ENCODE measurements at regions of chr13 and their contacts with region 1.

Region 1: DNA sequence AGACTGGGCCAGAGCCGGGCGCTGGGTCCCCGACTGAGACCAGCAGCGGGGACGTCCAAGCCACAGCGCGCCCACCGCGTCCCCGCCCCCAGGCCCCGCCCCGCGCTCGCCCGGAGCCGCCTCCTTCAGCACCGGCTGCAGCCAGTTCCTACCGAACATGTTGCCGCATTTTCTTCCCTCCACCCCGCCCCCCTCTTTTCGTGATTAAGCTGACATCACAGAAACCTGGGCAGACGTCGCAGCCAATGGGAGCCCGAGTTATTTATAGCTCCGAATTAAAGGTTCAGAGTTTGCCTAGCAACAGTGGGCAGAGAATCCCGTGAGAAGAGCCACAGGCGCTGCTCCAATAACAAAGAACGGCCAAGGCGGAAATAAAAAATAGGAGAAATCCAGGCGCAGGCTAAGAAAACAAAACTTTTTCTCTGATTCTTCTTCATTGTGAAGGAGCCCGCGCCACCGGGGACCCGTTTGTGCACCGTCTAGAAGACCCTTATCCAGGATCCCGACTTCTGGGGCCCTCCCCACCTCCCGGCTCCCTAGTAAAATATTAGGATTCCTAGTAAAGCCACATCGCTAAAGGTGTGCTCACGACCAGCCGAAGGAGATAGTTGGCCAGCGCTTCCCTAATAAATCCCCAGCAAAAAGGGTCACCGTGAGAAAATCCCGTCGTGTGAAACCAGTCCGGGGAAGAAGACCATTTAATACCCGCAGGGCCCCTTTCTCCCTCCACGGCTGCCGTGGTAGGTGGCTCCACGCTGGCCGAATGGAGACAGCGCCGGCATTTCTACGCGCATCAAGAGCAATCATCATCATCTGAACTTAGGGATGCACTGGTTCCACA is 61.7 kb downstream of the SERP2 start:
- DNase-seq: peak; percentile 99 to 100 (median 99)
- H3K4me3 ChIP-seq: peak overlapping the region; percentile 79 to 100 (median 87)
- H3K27ac ChIP-seq: peak overlapping the region; percentile 99
- H3K4me1 ChIP-seq: peaks cover 37 to 53% (median 43%) of the 10 kb centered on the region in 4 experiments
- H3K27me3 ChIP-seq: no peaks in the 10 kb centered on the region

Region 2: GRCh38 chr13:43905435-43906031 is 529.8 kb before region 1 on chr13:
- CTCF ChIA-PET with region 1: interaction called, 148 read pairs
- POLR2A ChIA-PET with region 1: interaction called, 4 read pairs
- DNase-seq: peak; percentile 65 to 81 (median 78)
- H3K4me3 ChIP-seq: no peak overlapping the region
- H3K27ac ChIP-seq: no peak overlapping the region
- H3K4me1 ChIP-seq: no peaks in the 10 kb centered on the region
- H3K27me3 ChIP-seq: no peaks in the 10 kb centered on the region

Region 3: GRCh38 chr13:44050450-44051063 is 384.8 kb before region 1 on chr13:
- CTCF ChIA-PET with region 1: interaction called, 25 read pairs
- POLR2A ChIA-PET with region 1: interaction called, 5 read pairs
- DNase-seq: peak; percentile 52 to 66 (median 58)
- H3K4me3 ChIP-seq: no peak overlapping the region
- H3K27ac ChIP-seq: no peak overlapping the region
- H3K4me1 ChIP-seq: peaks cover 0 to 24% (median 3%) of the 10 kb centered on the region in 4 experiments
- H3K27me3 ChIP-seq: no peaks in the 10 kb centered on the region

Region 4: DNA sequence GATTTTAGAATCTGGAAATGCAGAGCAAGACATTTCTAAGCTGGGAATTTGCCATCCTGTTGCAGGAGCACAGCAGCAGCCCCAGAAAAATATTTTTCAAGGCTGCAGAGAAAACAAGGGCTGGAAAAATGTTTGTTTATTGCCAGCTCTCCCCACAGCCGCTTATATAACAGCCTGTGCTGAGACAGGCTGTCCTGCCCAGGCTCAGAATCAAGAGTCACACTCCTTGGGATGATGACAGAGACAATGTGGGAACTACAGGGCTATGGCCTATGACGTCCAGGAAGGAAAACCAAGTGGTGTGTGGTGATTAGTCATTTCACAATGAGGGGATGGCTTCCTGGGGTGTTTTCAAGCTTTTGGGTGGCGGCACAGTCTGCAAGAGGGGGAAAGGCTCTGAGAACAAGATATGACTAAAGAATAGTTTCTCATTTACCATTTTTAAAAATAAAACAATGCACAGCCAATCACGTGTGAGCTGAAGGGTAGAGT is 198.0 kb before region 1 on chr13:
- CTCF ChIA-PET with region 1: interaction called, 220 read pairs
- POLR2A ChIA-PET with region 1: interaction called, 57 read pairs
- DNase-seq: peak; percentile 95 to 97 (median 97)
- H3K4me3 ChIP-seq: peak overlapping the region in 2 of 7 experiments; percentile 1 to 26
- H3K27ac ChIP-seq: peak overlapping the region; percentile 74 to 87
- H3K4me1 ChIP-seq: peaks cover 10 to 54% (median 41%) of the 10 kb centered on the region in 4 experiments
- H3K27me3 ChIP-seq: no peaks in the 10 kb centered on the region

Region 5: DNA sequence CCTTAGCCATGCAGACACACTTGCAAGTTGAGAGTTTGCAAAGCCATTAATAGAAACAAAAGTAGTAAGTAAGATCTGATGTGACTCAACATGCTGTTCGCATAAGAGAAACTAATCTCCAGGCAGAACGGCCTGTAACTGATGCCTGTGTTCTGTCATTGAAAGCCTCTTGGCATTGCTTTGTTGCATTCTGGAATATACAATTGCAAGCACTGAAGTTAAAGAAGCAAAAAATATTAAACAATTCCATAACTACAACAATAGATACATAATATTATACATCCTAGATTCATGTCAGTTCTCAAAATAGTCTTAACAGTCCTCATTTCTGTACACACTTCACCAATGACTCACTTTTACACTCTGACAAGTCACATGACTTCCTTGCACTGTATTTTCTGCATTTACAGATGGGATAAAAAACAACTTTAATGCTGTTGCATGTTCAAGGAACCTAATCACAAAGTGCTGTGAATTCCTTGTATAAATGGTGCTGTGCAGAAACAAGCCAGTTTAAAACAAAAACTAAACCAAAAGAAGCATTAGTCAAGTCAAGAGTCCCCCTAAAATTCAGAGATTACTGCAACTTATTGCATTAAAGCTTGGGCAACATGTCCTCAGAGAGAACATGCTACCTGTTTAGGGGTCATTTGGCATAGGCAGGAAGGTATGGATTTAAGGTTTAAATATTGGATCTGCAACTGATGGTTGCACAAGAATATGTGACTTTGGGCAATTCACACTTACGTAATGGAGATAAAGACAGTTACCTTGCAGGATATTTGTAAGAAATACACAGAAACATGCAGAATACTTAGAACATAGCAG is 141.2 kb before region 1 on chr13:
- CTCF ChIA-PET with region 1: no interaction called
- POLR2A ChIA-PET with region 1: no interaction called
- DNase-seq: peak in 2 of 3 donors; percentile 48 to 66
- H3K4me3 ChIP-seq: no peak overlapping the region
- H3K27ac ChIP-seq: no peak overlapping the region
- H3K4me1 ChIP-seq: peaks cover 6 to 16% (median 9%) of the 10 kb centered on the region in 4 experiments
- H3K27me3 ChIP-seq: no peaks in the 10 kb centered on the region

Region 6: GRCh38 chr13:44416297-44416696 is 19.1 kb before region 1 on chr13:
- CTCF ChIA-PET with region 1: interaction called, 17 read pairs
- POLR2A ChIA-PET with region 1: interaction called, 9 read pairs
- DNase-seq: peak; percentile 69 to 95 (median 92)
- H3K4me3 ChIP-seq: peak overlapping the region in 3 of 7 experiments; percentile 48 to 50 (median 49)
- H3K27ac ChIP-seq: peak overlapping the region in 1 of 2 experiments; percentile 38
- H3K4me1 ChIP-seq: peaks cover 2 to 52% (median 44%) of the 10 kb centered on the region in 4 experiments
- H3K27me3 ChIP-seq: no peaks in the 10 kb centered on the region

Region 7: GRCh38 chr13:44465318-44465717 is 30.0 kb after region 1 on chr13:
- CTCF ChIA-PET with region 1: interaction called, 13 read pairs
- POLR2A ChIA-PET with region 1: no interaction called
- DNase-seq: no peak
- H3K4me3 ChIP-seq: no peak overlapping the region
- H3K27ac ChIP-seq: no peak overlapping the region
- H3K4me1 ChIP-seq: peaks cover 0 to 11% (median 0%) of the 10 kb centered on the region in 4 experiments
- H3K27me3 ChIP-seq: no peaks in the 10 kb centered on the region

Measured in common myeloid progenitor, CD34-positive (primary cell).